Mammary epithelial cell (primary cell): ENCODE measurements at regions of chr10 and their contacts with region 1.

Region 1: GRCh38 chr10:73848821-73849489 is 25.4 kb downstream of the CAMK2G start:
- DNase-seq: peak; percentile 55
- H3K4me3 ChIP-seq: no peak overlapping the region
- H3K27ac ChIP-seq: no peak overlapping the region
- H3K4me1 ChIP-seq: no peaks in the 10 kb centered on the region
- H3K27me3 ChIP-seq: no peaks in the 10 kb centered on the region
- CTCF ChIP-seq: peak; percentile 98 to 100

Region 2: GRCh38 chr10:73717556-73717955 is 131.4 kb before region 1 on chr10:
- CTCF ChIA-PET with region 1: no interaction called
- dilution Hi-C with region 1: no loop called
- in situ Hi-C with region 1: no loop called
- intact Hi-C with region 1: no loop called
- DNase-seq: no peak
- H3K4me3 ChIP-seq: no peak overlapping the region
- H3K27ac ChIP-seq: no peak overlapping the region
- H3K4me1 ChIP-seq: no peaks in the 10 kb centered on the region
- H3K27me3 ChIP-seq: no peaks in the 10 kb centered on the region
- CTCF ChIP-seq: no peak

Region 3: DNA sequence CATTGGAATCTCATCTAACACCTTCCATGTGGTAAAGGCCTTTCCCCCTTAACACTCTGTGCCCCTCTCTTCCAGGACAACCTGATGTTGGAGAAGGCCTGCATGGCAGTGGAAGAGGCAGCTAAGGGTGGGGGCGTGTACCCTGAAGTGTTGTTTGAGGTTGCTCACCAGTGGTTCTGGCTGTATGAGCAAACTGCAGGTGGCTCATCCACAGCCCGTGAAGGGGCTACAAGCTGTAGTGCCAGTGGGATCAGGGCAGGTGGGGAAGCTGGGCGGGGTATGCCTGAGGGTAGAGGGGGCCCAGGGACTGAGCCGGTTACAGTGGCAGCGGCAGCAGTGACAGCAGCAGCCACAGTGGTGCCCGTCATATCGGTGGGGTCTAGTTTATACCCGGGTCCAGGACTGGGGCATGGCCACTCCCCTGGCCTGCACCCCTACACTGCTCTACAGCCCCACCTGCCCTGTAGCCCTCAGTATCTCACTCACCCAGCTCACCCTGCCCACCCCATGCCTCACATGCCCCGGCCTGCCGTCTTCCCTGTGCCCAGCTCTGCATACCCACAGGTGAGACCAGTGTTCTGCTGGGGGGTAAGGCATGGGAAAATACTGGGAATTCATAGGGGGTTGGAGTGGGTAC is 49.9 kb before region 1 on chr10:
- CTCF ChIA-PET with region 1: no interaction called
- dilution Hi-C with region 1: loop called (anchors 5 kb)
- in situ Hi-C with region 1: no loop called
- intact Hi-C with region 1: no loop called
- DNase-seq: no peak
- H3K4me3 ChIP-seq: no peak overlapping the region
- H3K27ac ChIP-seq: no peak overlapping the region
- H3K4me1 ChIP-seq: no peaks in the 10 kb centered on the region
- H3K27me3 ChIP-seq: no peaks in the 10 kb centered on the region
- CTCF ChIP-seq: no peak

Region 4: DNA sequence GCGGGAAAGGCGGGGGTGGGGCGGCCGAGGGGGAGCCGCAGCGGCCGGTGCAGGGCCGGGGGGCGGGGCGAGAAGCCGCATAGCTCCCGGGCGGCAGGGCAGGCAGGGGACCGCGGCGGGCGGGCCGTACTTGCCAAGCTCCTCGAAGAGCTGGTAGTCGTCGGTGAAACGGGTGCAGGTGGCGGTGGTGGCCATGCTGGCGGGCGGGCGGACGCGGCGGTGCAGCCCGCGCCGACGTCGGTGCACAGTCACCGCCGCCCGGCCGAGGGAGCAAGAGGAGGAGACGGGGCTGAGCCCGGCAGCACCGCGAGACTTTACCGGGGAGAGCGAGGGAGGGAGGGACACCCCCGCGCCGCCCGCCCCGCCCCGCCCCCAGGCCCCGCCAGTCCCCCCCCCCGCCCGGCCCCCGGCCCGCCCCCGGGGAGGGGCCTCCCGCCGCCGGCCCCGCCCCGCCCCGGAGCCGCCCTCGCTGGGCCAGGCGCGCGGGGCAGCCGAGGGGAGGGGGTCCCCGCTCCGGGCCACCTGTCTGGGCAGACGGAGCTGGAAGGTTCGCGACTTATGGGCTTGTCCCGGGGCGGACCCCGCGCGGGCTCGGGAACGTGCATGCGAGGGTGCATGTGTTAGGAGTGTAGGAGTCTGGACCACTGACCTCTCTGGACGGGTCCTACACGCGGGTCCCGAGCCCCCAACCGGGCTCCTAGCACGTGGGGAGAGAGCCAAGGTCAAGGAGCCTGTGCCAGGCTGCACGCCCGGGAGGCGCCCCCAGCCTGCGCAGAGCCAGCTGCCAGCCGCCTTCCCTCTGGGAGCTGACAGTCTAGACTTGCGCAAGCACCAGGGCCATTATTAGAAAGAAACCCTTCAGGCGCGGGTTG is 25.5 kb after region 1 on chr10 and contains the start of gene CAMK2G:
- CTCF ChIA-PET with region 1: interaction called, 6 read pairs
- dilution Hi-C with region 1: no loop called
- in situ Hi-C with region 1: no loop called
- intact Hi-C with region 1: loop called (anchors 1 kb)
- DNase-seq: peak; percentile 81
- H3K4me3 ChIP-seq: peak within 1 kb of the TSS; percentile 52 to 78 (median 72)
- H3K27ac ChIP-seq: no peak within 1 kb of the TSS
- H3K4me1 ChIP-seq: peaks cover 36% of the 10 kb centered on the region
- H3K27me3 ChIP-seq: no peaks in the 10 kb centered on the region
- CTCF ChIP-seq: no peak
- total RNA-seq, gene CAMK2G: 20.1 to 20.2 TPM

Region 5: GRCh38 chr10:73879296-73880173 is 30.6 kb after region 1 on chr10:
- CTCF ChIA-PET with region 1: interaction called, 6 read pairs
- dilution Hi-C with region 1: loop called (anchors 5 kb)
- in situ Hi-C with region 1: no loop called
- intact Hi-C with region 1: loop called (anchors 1 kb)
- DNase-seq: peak; percentile 80
- H3K4me3 ChIP-seq: no peak overlapping the region
- H3K27ac ChIP-seq: no peak overlapping the region
- H3K4me1 ChIP-seq: peaks cover 29% of the 10 kb centered on the region
- H3K27me3 ChIP-seq: no peaks in the 10 kb centered on the region
- CTCF ChIP-seq: peak; percentile 93 to 94

Region 6: GRCh38 chr10:73920089-73920488 is 71.1 kb after region 1 on chr10:
- CTCF ChIA-PET with region 1: no interaction called
- dilution Hi-C with region 1: loop called (anchors 5 kb)
- in situ Hi-C with region 1: no loop called
- intact Hi-C with region 1: no loop called
- DNase-seq: peak; percentile 95
- H3K4me3 ChIP-seq: no peak overlapping the region
- H3K27ac ChIP-seq: peak overlapping the region; percentile 96
- H3K4me1 ChIP-seq: peaks cover 43% of the 10 kb centered on the region
- H3K27me3 ChIP-seq: no peaks in the 10 kb centered on the region
- CTCF ChIP-seq: peak in 1 of 2 donors; percentile 27

Region 7: GRCh38 chr10:73940634-73941221 is 91.8 kb after region 1 on chr10:
- CTCF ChIA-PET with region 1: no interaction called
- dilution Hi-C with region 1: no loop called
- in situ Hi-C with region 1: no loop called
- intact Hi-C with region 1: loop called (anchors 1 kb)
- DNase-seq: peak; percentile 51
- H3K4me3 ChIP-seq: no peak overlapping the region
- H3K27ac ChIP-seq: peak overlapping the region; percentile 55
- H3K4me1 ChIP-seq: peaks cover 21% of the 10 kb centered on the region
- H3K27me3 ChIP-seq: no peaks in the 10 kb centered on the region
- CTCF ChIP-seq: peak; percentile 68 to 98

Region 8: GRCh38 chr10:74103560-74104248 is 254.7 kb after region 1 on chr10:
- CTCF ChIA-PET with region 1: no interaction called
- dilution Hi-C with region 1: no loop called
- in situ Hi-C with region 1: no loop called
- intact Hi-C with region 1: loop called (anchors 5 kb)
- DNase-seq: no peak
- H3K4me3 ChIP-seq: no peak overlapping the region
- H3K27ac ChIP-seq: no peak overlapping the region
- H3K4me1 ChIP-seq: peaks cover 17% of the 10 kb centered on the region
- H3K27me3 ChIP-seq: no peaks in the 10 kb centered on the region
- CTCF ChIP-seq: peak; percentile 21 to 45

Region 9: DNA sequence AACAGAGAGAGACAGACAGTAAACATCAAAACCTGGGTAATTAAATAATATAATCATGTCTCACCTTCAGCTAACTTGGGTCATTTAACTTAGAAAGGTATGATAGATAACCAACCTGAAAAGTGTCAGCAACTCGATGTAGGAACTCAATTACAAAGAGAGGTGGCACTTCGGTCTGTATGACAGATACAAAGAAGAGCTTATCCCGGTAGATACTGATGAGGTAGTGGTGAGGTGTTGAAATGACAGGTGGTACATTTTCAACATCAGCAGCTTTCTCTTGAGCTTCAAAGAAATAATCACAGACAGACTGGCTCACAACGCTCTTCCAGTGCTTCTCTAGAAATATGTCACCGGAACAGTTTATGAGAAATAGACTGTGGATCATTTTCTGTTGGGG is 289.0 kb after region 1 on chr10:
- CTCF ChIA-PET with region 1: no interaction called
- dilution Hi-C with region 1: no loop called
- in situ Hi-C with region 1: no loop called
- intact Hi-C with region 1: no loop called
- DNase-seq: no peak
- H3K4me3 ChIP-seq: no peak overlapping the region
- H3K27ac ChIP-seq: no peak overlapping the region
- H3K4me1 ChIP-seq: no peaks in the 10 kb centered on the region
- H3K27me3 ChIP-seq: no peaks in the 10 kb centered on the region
- CTCF ChIP-seq: no peak